ENCODE measurements at regions of chr3 and their contacts with region 1.

Region 1: GRCh38 chr3:88003115-88003755 is 55.6 kb downstream of the CGGBP1 start:
- DNase-seq: peak in 8 of 42 donors; percentile 11 to 60 (median 37)

Region 2: GRCh38 chr3:87298111-87298718 is 705.0 kb before region 1 on chr3:
- intact Hi-C with region 1: loop called (anchors 10 kb)
- DNase-seq: peak in 4 of 42 donors; percentile 9 to 57 (median 20)

Region 3: DNA sequence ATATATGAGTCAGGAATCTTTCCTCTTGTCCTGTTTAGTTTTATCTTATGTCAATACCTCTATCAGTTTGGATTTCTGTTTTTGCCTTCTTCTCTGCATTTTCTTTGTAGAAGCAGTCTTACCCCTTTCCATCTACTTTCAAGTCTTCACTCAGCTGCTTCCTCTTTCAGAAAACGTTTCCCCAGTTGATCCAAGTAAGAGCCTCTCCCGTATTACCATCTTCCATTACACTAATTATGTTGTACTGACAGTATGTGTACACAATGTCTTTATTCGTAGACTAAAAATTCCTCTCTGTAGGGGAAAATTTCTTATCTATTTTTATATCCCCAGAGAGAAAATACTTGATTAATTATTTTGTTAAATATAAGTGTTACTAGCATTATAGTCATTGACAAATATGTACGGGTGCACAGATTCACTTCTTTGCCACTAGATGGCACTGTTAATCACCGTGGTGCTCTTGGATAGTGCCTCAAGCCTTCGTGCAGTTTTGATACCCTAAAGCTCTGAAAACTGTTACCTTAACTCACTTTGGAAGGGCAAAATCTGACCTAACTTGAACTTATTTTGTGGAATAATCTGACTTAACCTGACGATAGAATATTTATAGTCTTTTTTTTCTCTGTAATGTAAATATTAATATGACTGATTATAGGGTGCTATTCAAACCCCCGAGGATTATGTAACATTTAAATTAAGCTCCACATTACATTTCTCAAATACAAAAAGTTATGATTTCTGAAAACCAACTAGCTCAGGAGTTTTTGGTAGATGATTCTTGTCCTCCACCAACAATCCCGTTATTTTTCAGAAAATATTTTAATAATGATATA is 652.7 kb before region 1 on chr3:
- intact Hi-C with region 1: loop called (anchors 10 kb)
- DNase-seq: peak in 24 of 42 donors; percentile 10 to 66 (median 34)

Region 4: DNA sequence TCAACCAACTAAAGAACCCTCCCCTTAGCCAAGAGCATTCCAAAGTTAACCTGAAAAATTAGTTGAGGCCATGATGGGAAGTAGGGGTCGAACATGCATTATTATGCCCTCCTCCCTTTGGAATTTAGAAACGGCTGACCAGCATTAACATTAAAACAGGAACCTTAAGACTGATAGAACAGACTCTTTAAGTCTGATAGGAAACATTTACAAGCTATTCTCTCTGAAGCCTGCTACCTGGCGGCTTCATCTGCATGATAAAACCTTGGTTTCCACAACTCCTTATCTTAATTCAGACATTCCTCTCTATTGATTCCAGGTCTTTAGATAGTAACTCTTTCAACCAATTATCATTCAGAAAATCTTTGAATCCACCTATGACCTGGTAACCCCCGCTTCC is 275.5 kb before region 1 on chr3:
- intact Hi-C with region 1: no loop called
- DNase-seq: no peak

Region 5: DNA sequence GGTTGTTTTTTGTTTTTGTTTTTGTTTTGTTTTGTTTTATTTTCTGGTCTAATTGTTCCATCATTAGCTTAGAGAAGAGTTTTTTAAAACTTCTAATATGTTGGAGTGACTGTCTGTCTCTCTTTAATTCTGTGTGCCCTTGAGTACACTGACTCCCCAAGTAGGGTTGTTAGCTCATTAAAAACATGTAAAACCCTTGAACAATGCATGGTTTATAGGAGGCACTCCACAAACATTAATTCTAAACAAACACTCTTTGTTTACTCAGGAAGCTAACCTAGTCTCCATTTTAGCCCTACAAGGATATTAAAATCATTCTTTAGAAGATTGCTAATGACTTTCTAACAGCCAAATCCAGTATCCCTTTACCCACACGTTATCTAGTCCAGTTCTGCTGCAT is 44.9 kb before region 1 on chr3:
- intact Hi-C with region 1: no loop called
- DNase-seq: no peak

Region 6: DNA sequence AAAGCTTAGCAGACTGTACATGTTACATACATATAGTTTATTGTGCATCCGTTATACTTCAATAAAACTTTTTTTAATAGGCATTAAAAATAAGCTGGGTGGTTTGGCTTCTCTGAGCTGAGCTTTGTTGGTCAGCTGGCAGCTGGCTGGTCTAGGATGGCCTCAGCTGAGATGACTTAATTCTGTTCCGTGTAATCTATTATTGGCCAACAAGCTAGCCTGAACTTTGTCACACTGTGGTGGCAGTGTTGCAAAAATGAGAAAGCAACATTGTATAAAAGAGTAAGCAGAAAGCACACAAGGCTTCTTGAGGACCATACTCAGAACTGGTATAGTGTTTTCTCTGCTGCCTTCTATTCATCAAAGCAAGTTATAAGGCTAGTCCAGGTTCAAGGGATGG is 10.4 kb after region 1 on chr3:
- intact Hi-C with region 1: no loop called
- DNase-seq: peak in 2 of 42 donors; percentile 7 to 31

Region 7: GRCh38 chr3:89372456-89372855 is 1369.2 kb after region 1 on chr3:
- intact Hi-C with region 1: no loop called
- DNase-seq: no peak

Measured in head of caudate nucleus (tissue), 42 donors.